IMR-90 (cell line): ENCODE measurements at regions of chr16 and their contacts with region 1.

Region 1: DNA sequence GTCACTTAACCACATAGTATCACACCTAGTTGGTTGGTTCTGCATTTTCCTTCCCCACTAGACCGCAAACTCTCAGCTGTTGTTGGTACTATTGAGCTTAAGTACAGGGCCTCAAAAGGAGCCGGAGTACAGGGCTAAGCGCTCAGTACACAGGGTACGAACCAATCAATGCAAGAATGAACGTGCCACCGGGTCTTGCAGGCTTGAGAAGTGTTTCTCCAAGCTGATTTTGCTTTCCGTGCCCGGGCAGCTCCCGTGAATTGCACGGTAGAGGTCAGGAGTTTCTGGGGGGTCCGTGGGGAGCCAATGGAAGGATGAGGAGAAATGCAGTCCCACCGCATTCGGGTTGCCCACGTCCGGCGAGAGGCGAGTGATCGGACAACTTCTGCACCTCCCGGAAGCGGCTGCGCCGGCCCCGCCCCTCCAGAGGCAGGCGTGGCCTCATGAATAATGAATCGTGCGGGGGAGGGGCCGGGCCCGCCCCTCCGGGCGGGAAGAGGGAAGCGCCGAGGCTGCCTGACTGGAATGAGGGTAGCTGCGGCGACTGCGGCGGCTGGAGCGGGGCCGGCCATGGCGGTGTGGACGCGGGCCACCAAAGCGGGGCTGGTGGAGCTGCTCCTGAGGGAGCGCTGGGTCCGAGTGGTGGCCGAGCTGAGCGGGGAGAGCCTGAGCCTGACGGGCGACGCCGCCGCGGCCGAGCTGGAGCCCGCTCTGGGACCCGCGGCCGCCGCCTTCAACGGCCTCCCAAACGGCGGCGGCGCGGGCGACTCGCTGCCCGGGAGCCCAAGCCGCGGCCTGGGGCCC is at the start of gene SNTB2:
- DNase-seq: peak; percentile 83
- ATAC-seq: peak; percentile 95
- H3K4me3 ChIP-seq: peak within 1 kb of the TSS; percentile 83
- H3K27ac ChIP-seq: peak within 1 kb of the TSS; percentile 98
- H3K4me1 ChIP-seq: peaks cover 13% of the 10 kb centered on the region
- H3K27me3 ChIP-seq: no peaks in the 10 kb centered on the region
- CTCF ChIP-seq: no peak
- POLR2A ChIP-seq: peak; percentile 84
- RAD21 ChIP-seq: peak; percentile 17; the same call in 1 of the 2 replicates
- total RNA-seq, gene SNTB2: 47.5 and 58.0 TPM in 2 replicates

Region 2: DNA sequence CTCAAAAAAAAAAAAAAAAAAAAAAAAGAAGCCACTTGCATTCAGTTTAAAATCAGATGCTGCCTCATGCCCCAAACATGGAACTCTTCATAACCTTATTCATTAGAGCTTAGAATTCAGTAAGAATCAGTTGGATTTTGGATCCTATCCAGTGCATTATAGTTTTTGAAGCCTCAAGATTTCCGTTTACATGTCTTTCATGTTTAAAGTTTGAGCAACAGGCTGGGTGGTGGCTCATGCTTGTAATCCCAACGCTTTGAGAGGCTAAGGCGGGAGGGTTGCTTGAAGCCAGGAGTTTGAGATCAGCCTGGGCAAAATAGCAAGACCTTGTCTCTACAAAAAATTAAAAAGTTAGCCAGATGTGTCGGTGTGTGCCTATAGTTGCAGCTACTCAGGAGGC is 55.1 kb after region 1 on chr16:
- CTCF ChIA-PET with region 1: no interaction called
- POLR2A ChIA-PET with region 1: interaction called, 10 read pairs
- dilution Hi-C with region 1: no loop called
- in situ Hi-C with region 1: no loop called
- intact Hi-C with region 1: no loop called
- DNase-seq: peak; percentile 76
- ATAC-seq: peak; percentile 31; the same call in 1 of the 2 replicates
- H3K4me3 ChIP-seq: no peak overlapping the region
- H3K27ac ChIP-seq: peak overlapping the region; percentile 63; the same call in 1 of the 2 replicates
- H3K4me1 ChIP-seq: peaks cover 14% of the 10 kb centered on the region
- H3K27me3 ChIP-seq: no peaks in the 10 kb centered on the region
- CTCF ChIP-seq: no peak
- POLR2A ChIP-seq: no peak
- RAD21 ChIP-seq: no peak

Region 3: DNA sequence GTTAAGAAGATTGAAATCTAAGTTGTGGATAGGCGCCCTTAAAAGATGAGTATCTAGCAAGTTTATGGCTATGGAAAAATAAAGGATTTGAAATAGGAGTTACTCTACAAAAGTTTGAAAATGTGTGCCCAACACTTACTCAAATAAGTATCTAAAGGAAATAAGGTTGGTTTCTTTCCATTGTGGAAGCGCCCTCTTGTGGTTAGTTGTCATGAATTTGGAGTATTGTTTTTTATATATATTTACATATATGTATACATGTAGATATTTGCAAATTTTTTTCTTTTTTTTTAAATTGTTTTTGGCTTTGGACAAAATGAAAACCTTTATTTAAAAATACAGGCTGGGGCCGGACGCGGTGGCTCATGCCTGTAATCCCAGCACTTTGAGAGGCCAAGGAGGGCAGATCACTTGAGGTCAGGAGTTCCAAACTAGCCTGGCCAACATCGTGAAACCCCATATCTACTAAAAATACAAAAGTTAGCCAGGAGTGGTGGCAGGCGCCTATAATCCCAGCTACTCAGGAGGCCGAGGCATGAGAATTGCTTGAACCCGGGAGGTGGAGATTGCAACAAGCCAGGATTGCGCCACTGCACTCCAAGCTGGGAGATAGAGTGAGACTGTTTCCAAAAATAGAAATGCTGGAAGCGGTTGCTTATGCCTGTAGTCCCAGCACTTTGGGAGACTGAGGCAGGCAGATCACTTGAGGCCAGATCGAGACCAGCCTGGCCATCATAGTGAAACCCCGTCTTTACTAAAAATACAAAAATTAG is 100.3 kb after region 1 on chr16:
- CTCF ChIA-PET with region 1: interaction called, 6 read pairs
- POLR2A ChIA-PET with region 1: no interaction called
- dilution Hi-C with region 1: no loop called
- in situ Hi-C with region 1: no loop called
- intact Hi-C with region 1: loop called (anchors 1 kb)
- DNase-seq: peak; percentile 78
- ATAC-seq: peak; percentile 67
- H3K4me3 ChIP-seq: no peak overlapping the region
- H3K27ac ChIP-seq: peak overlapping the region; percentile 64; the same call in 1 of the 2 replicates
- H3K4me1 ChIP-seq: peaks cover 9% of the 10 kb centered on the region
- H3K27me3 ChIP-seq: no peaks in the 10 kb centered on the region
- CTCF ChIP-seq: peak; percentile 57
- POLR2A ChIP-seq: no peak
- RAD21 ChIP-seq: peak; percentile 63

Region 4: GRCh38 chr16:69351309-69352027 is 164.6 kb after region 1 on chr16 and contains the start of gene TMED6:
- CTCF ChIA-PET with region 1: no interaction called
- POLR2A ChIA-PET with region 1: no interaction called
- dilution Hi-C with region 1: no loop called
- in situ Hi-C with region 1: no loop called
- intact Hi-C with region 1: no loop called
- DNase-seq: no peak
- ATAC-seq: no peak
- H3K4me3 ChIP-seq: no peak within 1 kb of the TSS
- H3K27ac ChIP-seq: no peak within 1 kb of the TSS
- H3K4me1 ChIP-seq: peaks cover 2% of the 10 kb centered on the region; the same call in 1 of the 2 replicates
- H3K27me3 ChIP-seq: no peaks in the 10 kb centered on the region
- CTCF ChIP-seq: no peak
- POLR2A ChIP-seq: no peak
- RAD21 ChIP-seq: no peak
- total RNA-seq, gene TMED6: not detected in 2 replicates